Activated CD4-positive, alpha-beta memory T cell treated with anti-CD3 and anti-CD28 coated beads for 36 hours (primary cell): ENCODE measurements at regions of chr20 and their contacts with region 1.

Region 1: GRCh38 chr20:32521780-32522525 is 63.2 kb downstream of the NOL4L start:
- DNase-seq: peak; percentile 78
- H3K4me3 Mint-ChIP-seq: no peak overlapping the region
- H3K27ac Mint-ChIP-seq: peak overlapping the region; percentile 58
- H3K4me1 Mint-ChIP-seq: peaks cover 47% of the 10 kb centered on the region
- H3K27me3 Mint-ChIP-seq: no peaks in the 10 kb centered on the region

Region 2: GRCh38 chr20:32509639-32510066 is 12.3 kb before region 1 on chr20:
- CTCF ChIA-PET with region 1: interaction called, 15 read pairs
- POLR2A ChIA-PET with region 1: no interaction called
- intact Hi-C with region 1: no loop called
- DNase-seq: peak; percentile 80
- H3K4me3 Mint-ChIP-seq: peak overlapping the region; percentile 40
- H3K27ac Mint-ChIP-seq: peak overlapping the region; percentile 71
- H3K4me1 Mint-ChIP-seq: peaks cover 76% of the 10 kb centered on the region
- H3K27me3 Mint-ChIP-seq: no peaks in the 10 kb centered on the region

Region 3: DNA sequence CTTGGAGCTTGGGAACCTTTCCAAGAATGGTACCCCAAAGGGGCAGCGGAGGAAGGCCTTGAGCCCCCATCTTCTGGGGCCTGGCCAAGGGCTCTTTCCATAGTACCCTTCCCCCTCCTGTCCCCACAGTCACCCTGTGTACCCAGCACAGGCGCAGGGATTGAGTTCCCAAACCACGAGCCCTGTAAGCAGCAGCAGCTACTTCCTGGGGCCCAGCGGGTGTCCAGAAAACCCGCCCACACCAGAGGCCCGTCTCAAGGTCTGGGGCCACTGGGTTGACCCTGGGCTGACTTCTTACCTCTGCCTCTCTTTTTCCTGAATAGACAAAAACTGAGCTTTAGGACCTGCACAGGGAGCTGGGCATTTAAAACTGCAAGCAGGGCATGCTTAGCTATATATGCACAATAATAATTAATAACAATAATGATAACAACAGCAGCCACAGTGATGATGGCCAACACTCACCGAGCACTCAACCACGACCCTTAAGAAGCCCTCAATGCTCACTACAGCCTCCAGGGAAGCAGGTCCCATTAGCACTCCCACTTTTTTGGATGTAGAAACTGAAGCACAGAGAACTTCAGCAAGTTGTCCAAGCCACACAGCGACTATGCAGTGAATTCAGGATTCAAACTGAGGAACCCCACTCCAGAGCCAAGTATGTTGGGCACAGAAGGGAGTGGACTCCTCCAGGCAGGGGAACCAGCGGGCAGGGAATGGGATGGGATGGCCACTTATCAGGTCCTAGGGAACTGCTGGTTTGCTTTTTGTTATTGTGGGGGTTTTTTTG is 48.6 kb after region 1 on chr20:
- CTCF ChIA-PET with region 1: interaction called, 10 read pairs
- POLR2A ChIA-PET with region 1: no interaction called
- intact Hi-C with region 1: no loop called
- DNase-seq: no peak
- H3K4me3 Mint-ChIP-seq: no peak overlapping the region
- H3K27ac Mint-ChIP-seq: no peak overlapping the region
- H3K4me1 Mint-ChIP-seq: peaks cover 29% of the 10 kb centered on the region
- H3K27me3 Mint-ChIP-seq: no peaks in the 10 kb centered on the region

Region 4: DNA sequence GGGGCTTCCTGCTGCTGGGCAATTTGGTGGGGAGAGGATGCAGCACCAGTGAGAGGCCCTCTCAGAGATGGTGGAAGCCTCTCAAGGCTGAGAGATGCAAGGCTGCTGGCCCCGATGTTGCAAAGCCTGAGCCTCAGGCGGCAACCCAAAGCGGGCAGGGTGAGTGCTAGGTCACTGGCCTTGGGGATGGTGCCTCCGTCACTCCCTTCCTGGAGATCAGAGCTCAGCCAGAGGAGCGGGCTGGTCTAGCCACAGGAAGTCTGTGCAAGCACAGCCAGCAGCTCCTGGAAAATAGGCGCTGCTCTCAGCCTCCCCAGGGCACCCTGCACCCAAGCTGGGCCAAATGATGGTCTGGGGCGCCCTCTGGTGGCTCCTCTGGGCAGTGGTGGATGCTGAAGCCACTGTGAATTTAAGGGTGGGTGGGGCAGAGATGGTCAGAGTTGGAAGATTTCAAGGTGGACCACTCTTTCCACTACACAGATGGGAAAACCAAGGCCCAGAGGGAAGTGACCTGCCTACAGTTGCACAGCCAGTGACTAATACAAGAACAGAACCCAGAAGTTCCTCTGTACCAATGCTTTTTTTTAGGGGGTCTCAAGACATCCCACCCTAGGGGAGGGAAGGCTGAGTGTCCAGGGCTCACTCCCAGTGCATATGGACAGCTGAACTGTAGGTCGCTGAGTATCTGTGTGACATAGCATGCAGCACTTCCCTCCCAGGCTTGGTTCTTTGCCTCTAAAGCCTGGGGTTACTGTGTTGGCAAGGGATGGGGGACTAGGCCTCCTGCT is 131.0 kb after region 1 on chr20:
- CTCF ChIA-PET with region 1: interaction called, 341 read pairs
- POLR2A ChIA-PET with region 1: no interaction called
- intact Hi-C with region 1: loop called (anchors 1 kb)
- DNase-seq: peak; percentile 92
- H3K4me3 Mint-ChIP-seq: no peak overlapping the region
- H3K27ac Mint-ChIP-seq: peak overlapping the region; percentile 13
- H3K4me1 Mint-ChIP-seq: peaks cover 9% of the 10 kb centered on the region
- H3K27me3 Mint-ChIP-seq: no peaks in the 10 kb centered on the region

Region 5: DNA sequence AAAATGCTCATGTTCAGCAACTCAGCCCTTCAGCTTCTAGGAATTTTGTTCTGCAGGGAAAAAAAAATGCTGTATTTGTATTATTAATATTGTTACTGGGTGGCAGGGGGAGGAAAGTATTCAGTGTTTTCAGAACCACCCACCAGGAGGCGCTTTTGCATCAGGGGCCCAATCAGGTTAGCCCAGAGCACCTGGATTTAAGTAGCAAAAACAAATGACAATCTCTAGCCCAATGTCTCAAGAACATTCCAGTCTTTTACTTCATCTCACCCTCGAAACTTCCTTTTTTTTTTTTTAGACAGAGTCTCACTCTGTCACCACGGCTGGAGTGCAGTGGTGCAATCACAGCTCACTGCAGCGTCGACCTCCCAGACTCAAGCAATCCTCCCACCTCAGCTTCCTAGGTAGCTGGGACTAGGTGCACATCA is 152.4 kb after region 1 on chr20:
- CTCF ChIA-PET with region 1: interaction called, 21 read pairs
- POLR2A ChIA-PET with region 1: no interaction called
- intact Hi-C with region 1: no loop called
- DNase-seq: peak; percentile 80
- H3K4me3 Mint-ChIP-seq: no peak overlapping the region
- H3K27ac Mint-ChIP-seq: no peak overlapping the region
- H3K4me1 Mint-ChIP-seq: peaks cover 9% of the 10 kb centered on the region
- H3K27me3 Mint-ChIP-seq: peaks cover 1% of the 10 kb centered on the region